Mammary epithelial cell (primary cell): ENCODE measurements at regions of chr9 and their contacts with region 1.

Region 1: DNA sequence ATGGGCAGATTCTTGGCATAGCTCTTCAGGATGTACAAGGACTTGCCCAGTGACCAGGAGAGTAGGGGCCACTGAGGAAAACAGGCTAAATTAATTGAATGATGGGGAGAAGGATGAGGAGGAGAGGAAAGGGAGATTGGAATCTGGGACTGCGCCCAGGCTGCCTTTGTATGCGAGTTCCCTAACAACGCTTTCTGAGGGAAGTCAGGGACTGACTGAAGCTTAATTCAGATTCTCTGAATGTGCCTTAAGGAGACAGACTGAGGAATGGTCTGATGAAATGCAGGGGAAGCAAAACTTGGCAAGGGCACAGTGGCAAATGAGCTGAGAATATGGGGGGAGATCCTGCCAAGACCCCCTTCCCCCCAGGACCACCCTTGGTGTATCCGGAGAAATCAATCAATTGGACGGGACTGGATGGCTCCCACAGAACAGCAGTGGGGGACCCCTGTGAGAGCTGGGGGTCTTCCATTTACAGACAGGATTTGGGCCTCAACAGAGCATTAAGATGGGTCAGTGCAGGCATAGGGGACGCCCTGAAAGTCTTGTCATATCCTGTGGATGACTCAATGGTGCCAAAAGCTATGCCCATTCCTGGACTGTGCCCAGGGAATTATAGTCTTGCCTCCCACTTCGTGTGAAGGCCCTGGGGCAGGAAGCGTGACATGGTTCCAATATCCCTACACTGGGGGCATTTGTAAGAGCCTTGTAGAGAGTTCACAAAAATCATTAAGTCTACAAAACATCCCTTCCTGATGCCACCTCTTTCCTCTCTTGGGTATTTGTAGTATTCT is 215.5 kb upstream of the TNC start:
- DNase-seq: peak; percentile 14
- H3K4me3 ChIP-seq: no peak overlapping the region
- H3K27ac ChIP-seq: no peak overlapping the region
- H3K4me1 ChIP-seq: peaks cover 6% of the 10 kb centered on the region
- H3K27me3 ChIP-seq: no peaks in the 10 kb centered on the region
- CTCF ChIP-seq: no peak

Region 2: GRCh38 chr9:115276621-115277020 is 56.9 kb before region 1 on chr9:
- CTCF ChIA-PET with region 1: no interaction called
- dilution Hi-C with region 1: loop called (anchors 5 kb)
- in situ Hi-C with region 1: no loop called
- intact Hi-C with region 1: no loop called
- DNase-seq: no peak
- H3K4me3 ChIP-seq: no peak overlapping the region
- H3K27ac ChIP-seq: no peak overlapping the region
- H3K4me1 ChIP-seq: peaks cover 17% of the 10 kb centered on the region
- H3K27me3 ChIP-seq: no peaks in the 10 kb centered on the region
- CTCF ChIP-seq: no peak